HepG2 (cell line): ENCODE measurements at regions of chr1 and their contacts with region 1.

Region 1: DNA sequence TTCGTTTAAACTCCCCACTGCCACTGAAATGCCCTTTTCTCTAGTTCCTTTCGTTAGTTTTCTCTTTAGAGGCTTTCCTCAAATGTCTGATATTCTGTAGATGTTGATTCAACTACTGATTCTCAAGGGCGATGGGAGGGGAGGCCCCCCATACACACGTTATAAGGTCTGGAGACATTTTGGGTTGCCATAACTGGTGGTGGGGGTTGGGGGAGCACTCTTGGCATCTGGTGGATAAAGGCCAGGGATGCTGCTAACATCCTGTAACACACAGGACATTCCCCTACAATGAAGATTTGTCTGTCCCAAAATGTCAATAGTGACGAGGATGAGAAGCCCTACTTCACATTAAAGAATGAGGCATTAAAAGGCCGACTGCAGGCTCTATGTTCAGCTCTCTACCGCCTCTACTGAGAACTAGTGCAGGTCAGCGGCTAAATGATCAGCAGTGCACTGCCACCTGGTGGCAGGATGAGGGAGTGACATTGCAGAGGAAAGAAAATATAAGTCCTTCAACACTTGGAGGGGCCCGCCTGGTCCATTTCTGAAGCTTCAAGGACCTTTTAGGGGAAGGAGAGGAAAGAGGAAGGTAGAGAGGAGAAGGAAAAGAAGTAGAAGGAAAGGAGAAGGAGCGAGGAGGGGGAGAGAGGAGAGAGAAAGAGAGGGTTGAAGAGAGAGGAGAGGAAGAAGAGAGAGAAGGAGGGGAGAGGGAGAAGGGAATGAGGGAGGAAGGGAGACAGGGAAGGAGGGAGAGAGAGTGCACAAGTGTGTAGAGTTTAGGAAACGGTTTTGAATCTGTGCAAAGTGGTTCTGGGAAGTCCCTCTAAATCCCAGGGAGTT is 29.4 kb downstream of the ALG14 start:
- DNase-seq: peak; percentile 77
- ATAC-seq: peak; percentile 91
- H3K4me3 ChIP-seq: no peak overlapping the region
- H3K27ac ChIP-seq: no peak overlapping the region
- H3K4me1 ChIP-seq: peaks cover 17% of the 10 kb centered on the region
- H3K27me3 ChIP-seq: no peaks in the 10 kb centered on the region
- CTCF ChIP-seq: peak; percentile 95
- EP300 ChIP-seq: no peak
- POLR2A ChIP-seq: no peak
- RAD21 ChIP-seq: peak; percentile 95

Region 2: DNA sequence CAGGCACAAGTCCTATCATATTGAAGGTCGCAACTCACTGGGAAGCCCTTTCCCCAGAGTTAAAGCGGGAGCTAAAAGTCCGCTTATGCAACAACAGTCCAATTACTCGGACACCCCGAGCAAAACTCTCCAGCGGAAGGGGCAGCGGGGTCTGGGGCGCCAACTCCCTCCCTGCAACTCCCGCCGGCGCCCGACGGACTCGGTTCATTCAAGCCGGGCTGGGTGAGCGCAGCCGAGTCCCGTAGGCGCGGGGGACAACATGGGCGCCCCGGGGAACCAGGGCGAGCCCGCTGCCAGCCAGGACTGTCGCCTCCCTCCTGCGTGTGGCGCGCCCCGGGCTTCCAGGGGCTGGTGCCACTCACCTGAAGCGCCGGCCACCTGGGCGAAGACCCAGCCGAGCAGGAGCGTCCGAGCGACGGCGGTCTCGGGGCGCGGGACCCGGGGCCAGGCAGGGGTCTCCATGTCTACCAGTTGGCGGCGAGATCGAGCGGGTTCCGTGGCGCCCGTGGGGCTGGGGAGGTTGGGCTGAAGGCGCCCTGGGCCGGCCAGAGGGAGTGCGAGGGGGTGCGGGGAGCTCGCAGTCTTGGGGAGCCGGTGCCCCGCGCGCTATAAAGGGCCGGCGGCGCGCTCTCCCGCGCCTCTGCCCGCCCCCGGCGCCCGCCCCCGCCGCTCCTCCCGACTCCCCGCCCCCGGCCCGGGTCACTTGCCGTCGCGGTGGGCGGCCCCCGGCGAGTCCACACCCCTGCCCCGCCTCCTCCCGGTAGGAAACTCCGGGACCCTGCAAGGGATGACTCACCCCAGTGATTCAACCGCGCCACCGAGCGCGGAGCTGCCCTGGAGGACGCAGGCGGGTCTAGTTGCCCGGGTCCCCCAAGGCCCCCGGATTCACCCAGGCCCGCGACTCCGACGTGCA is 501.9 kb before region 1 on chr1 and contains the start of gene F3:
- CTCF ChIA-PET with region 1: no interaction called
- POLR2A ChIA-PET with region 1: no interaction called
- in situ Hi-C with region 1: loop called (anchors 25 kb)
- intact Hi-C with region 1: no loop called
- DNase-seq: peak; percentile 72
- ATAC-seq: peak; percentile 90
- H3K4me3 ChIP-seq: peak within 1 kb of the TSS; percentile 54 to 90 (median 84)
- H3K27ac ChIP-seq: peak within 1 kb of the TSS; percentile 70
- H3K4me1 ChIP-seq: peaks cover 67% of the 10 kb centered on the region
- H3K27me3 ChIP-seq: no peaks in the 10 kb centered on the region
- CTCF ChIP-seq: peak; percentile 37
- EP300 ChIP-seq: no peak
- POLR2A ChIP-seq: peak; percentile 51 to 88
- RAD21 ChIP-seq: no peak
- total RNA-seq, gene F3: 3.4 and 9.0 TPM in 2 replicates

Region 3: GRCh38 chr1:94821636-94822305 is 221.6 kb before region 1 on chr1:
- CTCF ChIA-PET with region 1: no interaction called
- POLR2A ChIA-PET with region 1: no interaction called
- in situ Hi-C with region 1: no loop called
- intact Hi-C with region 1: loop called (anchors 1 kb)
- DNase-seq: peak; percentile 74
- ATAC-seq: peak; percentile 47
- H3K4me3 ChIP-seq: peak overlapping the region; percentile 76 to 93 (median 91); a peak in 5 of 6 replicates
- H3K27ac ChIP-seq: peak overlapping the region; percentile 54
- H3K4me1 ChIP-seq: peaks cover 37% of the 10 kb centered on the region
- H3K27me3 ChIP-seq: no peaks in the 10 kb centered on the region; a peak in 1 of 5 replicates
- CTCF ChIP-seq: no peak
- EP300 ChIP-seq: no peak
- POLR2A ChIP-seq: no peak
- RAD21 ChIP-seq: no peak

Region 4: DNA sequence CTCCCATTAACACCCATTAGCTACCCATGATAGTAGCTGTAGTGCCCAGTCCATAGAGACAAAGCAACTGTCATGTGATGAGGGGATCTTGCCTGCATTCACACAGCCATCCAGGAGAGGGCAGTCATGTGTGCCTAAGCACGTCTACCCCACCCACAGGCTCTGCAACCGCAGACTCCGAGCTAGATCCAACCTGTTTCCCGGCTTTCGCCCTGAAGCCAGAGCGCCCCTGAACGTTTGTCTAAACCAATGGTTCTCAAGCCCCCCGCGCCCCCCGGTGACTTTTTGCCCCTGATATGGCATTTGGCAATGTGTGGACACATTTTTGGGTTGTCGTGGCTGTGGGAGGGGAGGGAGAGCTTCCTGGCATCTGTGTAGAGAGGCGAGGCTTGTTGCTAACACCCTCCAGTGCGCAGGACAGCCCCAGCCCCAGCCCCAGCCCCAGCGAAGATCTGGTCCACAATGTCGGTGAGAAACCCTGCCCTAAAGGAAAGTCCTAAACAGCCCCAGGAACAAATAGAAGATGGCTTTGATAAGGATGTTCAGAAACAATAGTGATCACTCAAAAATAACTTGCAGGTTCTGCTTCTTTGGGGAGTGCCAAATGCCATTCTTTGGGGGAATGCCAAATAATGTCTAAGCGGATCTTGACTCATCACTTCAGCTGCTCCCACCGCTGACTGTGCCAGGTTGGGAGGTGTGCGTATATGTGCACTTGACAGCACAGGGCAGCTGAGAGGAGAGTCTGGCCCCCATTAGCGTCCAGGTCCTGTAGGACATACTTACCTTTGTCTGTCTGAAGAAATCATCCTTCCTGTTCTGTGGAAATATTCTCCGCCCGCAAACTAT is 188.7 kb before region 1 on chr1:
- CTCF ChIA-PET with region 1: interaction called, 120 read pairs
- POLR2A ChIA-PET with region 1: interaction called, 7 read pairs
- in situ Hi-C with region 1: loop called (anchors 5 kb)
- intact Hi-C with region 1: loop called (anchors 1 kb)
- DNase-seq: peak; percentile 74
- ATAC-seq: peak; percentile 99
- H3K4me3 ChIP-seq: peak overlapping the region in 1 of 3 experiments; percentile 60; a peak in 1 of 6 replicates
- H3K27ac ChIP-seq: no peak overlapping the region
- H3K4me1 ChIP-seq: peaks cover 15% of the 10 kb centered on the region
- H3K27me3 ChIP-seq: no peaks in the 10 kb centered on the region
- CTCF ChIP-seq: peak; percentile 98
- EP300 ChIP-seq: no peak
- POLR2A ChIP-seq: no peak
- RAD21 ChIP-seq: peak; percentile 95

Region 5: GRCh38 chr1:94903280-94904009 is 139.9 kb before region 1 on chr1:
- CTCF ChIA-PET with region 1: no interaction called
- POLR2A ChIA-PET with region 1: no interaction called
- in situ Hi-C with region 1: no loop called
- intact Hi-C with region 1: no loop called
- DNase-seq: no peak
- ATAC-seq: no peak
- H3K4me3 ChIP-seq: no peak overlapping the region
- H3K27ac ChIP-seq: no peak overlapping the region
- H3K4me1 ChIP-seq: peaks cover 7% of the 10 kb centered on the region
- H3K27me3 ChIP-seq: no peaks in the 10 kb centered on the region
- CTCF ChIP-seq: no peak
- EP300 ChIP-seq: no peak
- POLR2A ChIP-seq: no peak
- RAD21 ChIP-seq: no peak

Region 6: GRCh38 chr1:94926915-94927404 is 116.4 kb before region 1 on chr1 and contains the start of gene CNN3:
- CTCF ChIA-PET with region 1: interaction called, 22 read pairs
- POLR2A ChIA-PET with region 1: interaction called, 6 read pairs
- in situ Hi-C with region 1: loop called (anchors 5 kb)
- intact Hi-C with region 1: loop called (anchors 1 kb)
- DNase-seq: peak; percentile 82
- ATAC-seq: peak; percentile 92
- H3K4me3 ChIP-seq: peak within 1 kb of the TSS; percentile 79 to 81 (median 81)
- H3K27ac ChIP-seq: peak within 1 kb of the TSS; percentile 95
- H3K4me1 ChIP-seq: peaks cover 64% of the 10 kb centered on the region
- H3K27me3 ChIP-seq: no peaks in the 10 kb centered on the region; a peak in 1 of 5 replicates
- CTCF ChIP-seq: peak; percentile 39
- EP300 ChIP-seq: no peak; a peak in 1 of 4 replicates
- POLR2A ChIP-seq: peak; percentile 92 to 97
- RAD21 ChIP-seq: peak; percentile 40
- total RNA-seq, gene CNN3: 223 and 290 TPM in 2 replicates

Region 7: GRCh38 chr1:94962409-94963265 is 80.7 kb before region 1 on chr1:
- CTCF ChIA-PET with region 1: no interaction called
- POLR2A ChIA-PET with region 1: no interaction called
- in situ Hi-C with region 1: no loop called
- intact Hi-C with region 1: loop called (anchors 5 kb)
- DNase-seq: peak; percentile 85
- ATAC-seq: peak; percentile 96
- H3K4me3 ChIP-seq: peak overlapping the region; percentile 42 to 57 (median 45); a peak in 4 of 6 replicates
- H3K27ac ChIP-seq: peak overlapping the region; percentile 96
- H3K4me1 ChIP-seq: peaks cover 55% of the 10 kb centered on the region
- H3K27me3 ChIP-seq: no peaks in the 10 kb centered on the region
- CTCF ChIP-seq: no peak
- EP300 ChIP-seq: peak in 1 of 2 experiments; percentile 92; a peak in 2 of 4 replicates
- POLR2A ChIP-seq: peak in 1 of 2 experiments; percentile 47; a peak in 1 of 4 replicates
- RAD21 ChIP-seq: no peak

Region 8: GRCh38 chr1:95168761-95169351 is 125.5 kb after region 1 on chr1:
- CTCF ChIA-PET with region 1: no interaction called
- POLR2A ChIA-PET with region 1: no interaction called
- in situ Hi-C with region 1: no loop called
- intact Hi-C with region 1: no loop called
- DNase-seq: no peak
- ATAC-seq: no peak
- H3K4me3 ChIP-seq: no peak overlapping the region
- H3K27ac ChIP-seq: peak overlapping the region; percentile 1
- H3K4me1 ChIP-seq: peaks cover 11% of the 10 kb centered on the region
- H3K27me3 ChIP-seq: no peaks in the 10 kb centered on the region
- CTCF ChIP-seq: no peak
- EP300 ChIP-seq: no peak
- POLR2A ChIP-seq: no peak
- RAD21 ChIP-seq: no peak

Region 9: DNA sequence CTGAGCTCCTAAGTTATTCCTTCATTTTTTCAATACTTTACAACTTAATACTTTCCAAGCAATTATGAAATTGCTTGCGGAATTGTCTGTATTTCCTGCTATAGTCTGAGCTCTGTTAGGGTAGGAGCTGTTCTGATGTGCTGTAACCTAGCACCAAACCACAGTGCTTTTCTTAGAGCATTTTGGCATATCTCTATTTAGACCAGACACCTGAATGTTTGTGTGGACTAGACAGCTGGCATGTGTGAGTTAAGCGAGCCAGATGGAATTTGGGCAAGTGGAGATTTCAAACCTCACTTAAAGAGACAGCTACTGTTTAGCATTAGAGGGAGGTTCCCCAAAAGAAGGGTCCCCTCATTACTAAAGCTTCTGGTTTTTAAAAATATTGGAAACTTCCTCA is 296.7 kb after region 1 on chr1:
- CTCF ChIA-PET with region 1: no interaction called
- POLR2A ChIA-PET with region 1: no interaction called
- in situ Hi-C with region 1: no loop called
- intact Hi-C with region 1: no loop called
- DNase-seq: no peak
- ATAC-seq: no peak
- H3K4me3 ChIP-seq: no peak overlapping the region
- H3K27ac ChIP-seq: no peak overlapping the region
- H3K4me1 ChIP-seq: no peaks in the 10 kb centered on the region
- H3K27me3 ChIP-seq: no peaks in the 10 kb centered on the region; a peak in 2 of 5 replicates
- CTCF ChIP-seq: no peak
- EP300 ChIP-seq: no peak
- POLR2A ChIP-seq: no peak
- RAD21 ChIP-seq: no peak